HEK293 (cell line): ENCODE measurements at regions of chr17 and their contacts with region 1.

Region 1: DNA sequence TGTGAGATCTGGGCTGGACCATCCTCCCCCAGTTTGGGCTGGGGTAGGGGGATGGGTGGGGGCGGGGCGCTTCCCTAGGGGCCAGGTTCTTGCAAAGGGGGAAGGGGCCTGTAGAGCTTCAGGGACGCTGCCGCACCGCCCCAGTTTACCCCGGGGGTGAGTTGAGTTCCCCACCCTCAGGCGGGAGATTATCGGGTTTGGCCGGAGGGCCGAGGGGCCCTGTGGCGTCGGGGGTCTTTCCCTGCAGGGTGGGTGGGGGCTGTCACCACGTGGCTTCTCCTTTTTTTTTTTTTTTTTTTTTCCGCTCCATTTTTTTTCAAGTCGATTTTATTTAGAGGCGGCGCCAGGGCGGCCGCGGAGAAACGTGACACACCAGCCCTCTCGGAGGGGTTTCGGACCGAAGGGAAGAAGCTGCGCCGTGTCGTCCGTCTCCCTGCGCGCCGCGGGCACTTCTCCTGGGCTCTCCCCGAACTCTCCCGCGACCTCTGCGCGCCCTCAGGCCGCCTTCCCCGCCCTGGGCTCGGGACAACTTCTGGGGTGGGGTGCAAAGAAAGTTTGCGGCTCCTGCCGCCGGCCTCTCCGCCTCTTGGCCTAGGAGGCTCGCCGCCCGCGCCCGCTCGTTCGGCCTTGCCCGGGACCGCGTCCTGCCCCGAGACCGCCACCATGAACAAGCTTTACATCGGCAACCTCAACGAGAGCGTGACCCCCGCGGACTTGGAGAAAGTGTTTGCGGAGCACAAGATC is at the start of gene IGF2BP1:
- H3K4me3 ChIP-seq: peak within 1 kb of the TSS; percentile 64
- H3K27ac ChIP-seq: peak within 1 kb of the TSS; percentile 100
- H3K4me1 ChIP-seq: peaks cover 27% of the 10 kb centered on the region
- CTCF ChIP-seq: no peak

Region 2: DNA sequence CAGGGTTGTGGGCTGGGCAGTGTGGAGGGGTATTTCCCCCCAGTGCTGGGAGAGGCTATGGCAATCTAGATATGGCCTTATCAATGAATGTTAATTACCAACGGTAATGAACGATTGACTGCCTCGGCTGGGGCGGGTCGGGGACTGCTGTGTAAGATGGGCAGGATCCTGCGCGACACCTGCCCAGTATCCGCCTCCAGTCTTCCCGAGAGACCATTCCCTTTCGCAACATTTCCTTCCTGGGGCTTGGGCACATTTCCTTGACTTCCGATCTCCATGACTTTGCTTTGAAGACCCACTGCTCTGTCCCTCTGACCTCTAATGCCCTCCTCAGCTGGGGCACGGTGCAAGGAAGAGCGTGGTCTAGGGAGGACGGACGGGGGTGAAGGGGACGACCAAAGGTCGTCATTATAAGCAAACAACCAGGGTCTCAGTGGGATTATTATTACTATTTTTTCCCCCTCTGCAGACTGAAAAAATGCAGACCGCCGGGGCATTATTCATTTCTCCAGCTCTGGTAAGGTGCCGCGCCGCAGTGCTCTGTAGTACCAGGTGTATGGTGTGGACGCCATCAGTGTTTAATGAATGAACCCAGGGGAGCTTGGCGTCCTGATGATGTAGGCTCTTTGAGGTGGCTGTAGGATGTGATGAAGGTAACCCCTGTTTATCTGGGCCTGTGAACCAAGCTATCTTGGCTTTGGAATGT is 104.2 kb before region 1 on chr17:
- CTCF ChIA-PET with region 1: interaction called, 5 read pairs
- POLR2A ChIA-PET with region 1: interaction called, 24 read pairs
- H3K4me3 ChIP-seq: peak overlapping the region; percentile 83
- H3K27ac ChIP-seq: peak overlapping the region; percentile 54; the same call in 1 of the 2 replicates
- H3K4me1 ChIP-seq: 0 out of 2 replicates have a peak, but pooled peaks cover 3% of the 10 kb centered on the region
- CTCF ChIP-seq: peak; percentile 39; the same call in 1 of the 2 replicates

Region 3: GRCh38 chr17:48944519-48945260 is 52.6 kb before region 1 on chr17 and contains the start of gene SNF8:
- CTCF ChIA-PET with region 1: interaction called, 3 read pairs
- POLR2A ChIA-PET with region 1: interaction called, 46 read pairs
- H3K4me3 ChIP-seq: peak within 1 kb of the TSS; percentile 69
- H3K27ac ChIP-seq: peak within 1 kb of the TSS; percentile 76
- H3K4me1 ChIP-seq: 0 out of 2 replicates have a peak, but pooled peaks cover 3% of the 10 kb centered on the region
- CTCF ChIP-seq: 0 out of 2 replicates have a peak, but pooled peaks have one; percentile 15

Region 4: DNA sequence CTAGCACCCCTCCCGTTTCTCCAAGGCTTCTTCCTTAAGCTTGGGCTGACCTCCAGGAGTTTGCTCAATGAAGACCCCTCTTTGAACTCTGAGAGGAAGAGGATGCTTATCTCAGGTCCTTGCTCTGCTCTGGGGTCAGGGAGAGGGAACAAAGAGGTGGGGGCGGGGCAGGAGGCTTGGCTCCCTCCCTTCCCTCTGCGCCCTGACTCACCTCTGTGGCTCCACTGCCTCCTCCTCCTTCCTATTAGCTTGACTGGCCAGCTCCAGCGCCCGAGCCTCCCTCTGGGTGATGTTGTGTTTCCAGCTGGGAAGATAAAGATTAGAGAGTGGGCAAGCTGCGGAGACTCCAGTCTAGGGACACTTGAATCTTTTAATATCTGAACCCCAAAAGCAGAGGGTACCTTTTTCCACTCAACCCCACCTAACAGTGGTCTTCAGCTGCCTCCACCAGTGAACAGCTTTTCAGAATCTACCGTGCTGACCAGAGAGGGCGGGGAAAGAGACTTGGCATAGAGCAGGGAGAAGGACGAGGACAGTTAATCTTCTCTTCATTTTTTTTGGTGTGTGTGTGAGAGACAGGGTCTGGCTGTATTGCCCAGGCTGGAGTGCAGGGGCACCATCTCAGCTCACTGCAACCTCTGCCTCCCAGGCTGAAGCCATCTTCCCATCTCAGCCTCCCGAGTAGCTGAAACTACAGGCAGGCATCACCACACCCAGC is 35.6 kb before region 1 on chr17:
- CTCF ChIA-PET with region 1: interaction called, 5 read pairs
- POLR2A ChIA-PET with region 1: interaction called, 13 read pairs
- H3K4me3 ChIP-seq: no peak overlapping the region
- H3K27ac ChIP-seq: no peak overlapping the region
- H3K4me1 ChIP-seq: no peaks in the 10 kb centered on the region; the same call in 1 of the 2 replicates
- CTCF ChIP-seq: no peak

Region 5: DNA sequence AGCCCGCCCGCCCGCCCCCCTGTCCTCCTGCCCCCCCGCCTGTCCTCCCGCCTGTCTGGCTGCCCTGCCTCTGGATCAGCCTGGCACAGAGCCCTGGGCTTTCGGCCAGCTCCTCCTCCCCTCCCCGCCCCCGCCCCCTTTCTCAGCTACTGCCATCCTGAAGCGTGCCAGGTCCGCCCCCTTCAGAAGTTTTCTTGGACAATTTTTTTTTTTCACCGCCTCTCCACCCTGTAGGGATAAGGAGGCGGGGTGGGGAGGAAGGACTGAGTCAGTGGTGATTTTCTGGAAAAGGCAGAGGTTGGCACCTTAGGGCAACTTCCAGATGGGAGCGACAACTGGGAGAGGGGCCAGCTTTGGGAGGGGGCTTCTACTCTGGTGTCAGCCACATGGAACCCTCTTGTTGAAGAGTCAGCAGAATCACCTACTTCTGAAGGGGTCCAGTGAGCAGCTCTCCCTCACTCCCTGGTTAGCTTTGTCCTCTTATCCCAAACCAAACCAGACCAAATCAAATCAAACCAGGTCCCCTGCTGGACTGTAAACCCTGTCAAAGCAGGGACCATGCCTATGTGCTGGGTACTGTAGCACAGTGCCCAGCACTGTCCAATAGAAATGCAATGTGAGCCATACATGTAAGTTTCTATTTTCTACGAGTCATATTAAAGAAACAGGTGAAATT is 19.7 kb after region 1 on chr17:
- CTCF ChIA-PET with region 1: interaction called, 3 read pairs
- POLR2A ChIA-PET with region 1: interaction called, 28 read pairs
- H3K4me3 ChIP-seq: no peak overlapping the region
- H3K27ac ChIP-seq: 0 out of 2 replicates have a peak overlapping the region, but pooled peaks have one; percentile 48
- H3K4me1 ChIP-seq: peaks cover 42% of the 10 kb centered on the region
- CTCF ChIP-seq: no peak

Region 6: DNA sequence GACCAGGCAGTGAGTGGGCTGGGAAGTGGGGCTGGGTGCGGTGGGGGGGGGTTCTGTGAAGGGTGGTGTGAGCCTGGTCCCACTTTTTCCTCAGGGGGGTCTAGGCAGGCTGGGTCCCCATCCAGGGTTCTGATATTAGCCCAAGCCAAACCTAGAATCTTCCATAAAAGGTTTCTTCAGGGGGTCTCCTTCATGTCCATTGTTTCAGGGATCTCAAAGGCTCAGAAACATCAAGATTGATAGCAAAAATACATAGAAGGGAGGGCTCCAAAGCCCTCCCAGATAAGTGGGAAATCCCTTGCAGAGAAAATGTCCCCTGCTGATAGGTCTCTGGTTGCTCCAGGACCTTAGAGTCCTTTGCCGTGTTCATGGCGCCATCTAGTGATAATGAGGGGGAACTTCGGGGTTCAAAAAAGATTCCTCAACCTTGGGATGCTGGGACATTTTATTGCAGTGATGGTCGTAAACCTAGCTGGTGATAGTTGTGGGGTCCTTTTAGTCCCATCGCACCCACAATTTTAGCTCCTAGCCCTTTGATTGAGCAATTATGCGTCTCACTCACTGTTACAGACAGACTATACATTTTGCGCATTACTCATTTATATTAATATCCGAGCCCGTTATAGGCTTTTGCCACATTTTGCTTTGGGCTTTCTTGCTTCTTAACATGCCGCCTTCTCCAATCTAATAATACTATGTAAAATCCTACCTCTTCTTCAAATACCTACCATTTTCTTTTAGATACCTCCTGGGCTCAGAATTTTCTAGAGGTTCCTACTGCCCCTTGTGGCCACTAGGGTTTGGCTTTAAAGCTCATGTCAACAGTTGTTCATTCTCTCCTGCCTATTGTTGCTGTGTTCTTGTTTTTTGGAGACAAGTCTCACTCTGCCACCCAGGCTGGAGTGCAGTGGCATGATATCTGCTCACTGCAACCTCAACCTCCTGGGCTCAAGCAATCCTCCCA is 35.0 kb after region 1 on chr17:
- CTCF ChIA-PET with region 1: interaction called, 129 read pairs
- POLR2A ChIA-PET with region 1: interaction called, 19 read pairs
- H3K4me3 ChIP-seq: no peak overlapping the region
- H3K27ac ChIP-seq: 0 out of 2 replicates have a peak overlapping the region, but pooled peaks have one; percentile 5
- H3K4me1 ChIP-seq: no peaks in the 10 kb centered on the region; the same call in 1 of the 2 replicates
- CTCF ChIP-seq: peak; percentile 73